ENCODE measurements at regions of chr3 and their contacts with region 1.

Region 1: GRCh38 chr3:122258757-122259371 is 66.2 kb upstream of the CSTA start:
- DNase-seq: peak; percentile 53
- ATAC-seq: peak; percentile 99
- H3K4me3 ChIP-seq: no peak overlapping the region
- H3K27ac ChIP-seq: no peak overlapping the region
- H3K4me1 ChIP-seq: 0 out of 4 replicates have a peak, but pooled peaks cover 0 to 3% of the 10 kb centered on the region in 2 experiments
- H3K27me3 ChIP-seq: no peaks in the 10 kb centered on the region
- CTCF ChIP-seq: peak; percentile 76 to 77 (median 76)
- POLR2A ChIP-seq: no peak
- RAD21 ChIP-seq: peak; percentile 90

Region 2: DNA sequence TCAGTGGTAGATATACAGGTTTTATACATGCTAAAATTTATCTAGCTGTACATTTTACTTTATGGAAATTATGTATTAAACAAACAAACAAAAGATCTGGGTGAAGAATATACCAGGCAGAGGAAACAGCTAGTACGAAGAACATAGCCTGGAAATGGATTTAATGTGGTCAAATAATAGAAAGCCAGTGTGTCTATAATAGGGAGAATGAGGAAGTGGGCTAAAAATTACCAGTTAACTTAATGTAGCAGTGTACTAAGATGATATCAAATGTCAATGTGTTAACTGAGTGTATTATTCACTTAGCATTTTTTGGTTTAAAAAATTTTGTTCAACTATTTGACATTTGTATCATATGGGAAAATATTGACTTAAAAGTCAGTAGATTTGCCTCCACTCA is 387.4 kb before region 1 on chr3:
- CTCF ChIA-PET with region 1: no interaction called
- POLR2A ChIA-PET with region 1: no interaction called
- RAD21 ChIA-PET with region 1: no interaction called
- intact Hi-C with region 1: loop called (anchors 10 kb)
- DNase-seq: no peak
- ATAC-seq: no peak
- H3K4me3 ChIP-seq: no peak overlapping the region
- H3K27ac ChIP-seq: no peak overlapping the region
- H3K4me1 ChIP-seq: no peaks in the 10 kb centered on the region
- H3K27me3 ChIP-seq: no peaks in the 10 kb centered on the region
- CTCF ChIP-seq: no peak
- POLR2A ChIP-seq: no peak
- RAD21 ChIP-seq: no peak

Region 3: GRCh38 chr3:122092460-122093165 is 166.3 kb before region 1 on chr3:
- CTCF ChIA-PET with region 1: no interaction called
- POLR2A ChIA-PET with region 1: no interaction called
- RAD21 ChIA-PET with region 1: no interaction called
- intact Hi-C with region 1: no loop called
- DNase-seq: peak; percentile 10
- ATAC-seq: peak; percentile 97
- H3K4me3 ChIP-seq: no peak overlapping the region
- H3K27ac ChIP-seq: no peak overlapping the region
- H3K4me1 ChIP-seq: no peaks in the 10 kb centered on the region
- H3K27me3 ChIP-seq: 0 out of 2 replicates have a peak, but pooled peaks cover 1% of the 10 kb centered on the region
- CTCF ChIP-seq: peak; percentile 32 to 80 (median 70); a peak in 5 of 6 replicates
- POLR2A ChIP-seq: no peak
- RAD21 ChIP-seq: peak; percentile 53

Region 4: GRCh38 chr3:122468896-122469533 is 210.2 kb after region 1 on chr3:
- CTCF ChIA-PET with region 1: no interaction called
- POLR2A ChIA-PET with region 1: no interaction called
- RAD21 ChIA-PET with region 1: no interaction called
- intact Hi-C with region 1: no loop called
- DNase-seq: no peak
- ATAC-seq: no peak
- H3K4me3 ChIP-seq: no peak overlapping the region
- H3K27ac ChIP-seq: no peak overlapping the region
- H3K4me1 ChIP-seq: peaks cover 7 to 11% of the 10 kb centered on the region in 2 experiments
- H3K27me3 ChIP-seq: no peaks in the 10 kb centered on the region
- CTCF ChIP-seq: no peak
- POLR2A ChIP-seq: no peak
- RAD21 ChIP-seq: no peak